Mammary epithelial cell (primary cell): ENCODE measurements at regions of chr15 and their contacts with region 1.

Region 1: DNA sequence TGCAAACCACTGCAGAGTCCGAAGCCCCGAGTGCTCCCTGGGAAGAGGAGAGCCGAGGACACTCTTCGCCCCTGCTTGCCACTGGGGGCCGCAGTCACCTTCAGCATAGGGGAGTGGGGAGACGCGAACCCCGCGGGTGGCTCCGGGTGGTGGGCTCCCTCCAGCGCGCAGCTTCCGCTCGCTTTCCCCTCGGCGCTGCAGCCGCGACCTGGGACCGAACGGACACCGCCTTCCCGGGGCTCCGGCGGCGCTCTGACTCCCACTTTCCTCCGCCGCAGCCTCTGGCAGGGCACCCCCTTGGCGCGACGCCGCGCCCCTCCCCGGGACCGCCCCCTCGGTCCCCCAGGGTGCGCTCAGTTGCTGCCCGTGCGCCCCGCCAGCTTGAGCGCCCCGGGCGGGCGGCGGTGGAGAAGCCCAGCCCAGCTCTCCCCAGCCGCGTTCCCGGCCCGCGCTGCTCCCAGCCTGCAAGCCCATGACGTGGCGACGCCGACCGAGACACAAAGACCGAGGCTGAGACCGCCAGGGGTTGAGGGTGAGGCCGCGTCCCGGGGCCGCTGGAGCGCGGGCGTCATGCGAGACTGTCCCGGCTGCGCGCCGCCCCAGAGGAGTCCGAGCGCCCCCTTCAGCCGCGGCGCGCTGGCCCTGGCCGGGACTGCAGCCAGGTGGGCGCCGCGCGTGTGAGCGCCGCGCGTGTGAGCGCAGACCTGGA is at the start of gene MINAR1:
- DNase-seq: peak; percentile 43
- H3K4me3 ChIP-seq: peak within 1 kb of the TSS; percentile 12 to 44 (median 30)
- H3K27ac ChIP-seq: no peak within 1 kb of the TSS
- H3K4me1 ChIP-seq: peaks cover 12% of the 10 kb centered on the region
- H3K27me3 ChIP-seq: peaks cover 37% of the 10 kb centered on the region
- CTCF ChIP-seq: no peak
- total RNA-seq, gene MINAR1: 0.12 to 0.50 TPM

Region 2: DNA sequence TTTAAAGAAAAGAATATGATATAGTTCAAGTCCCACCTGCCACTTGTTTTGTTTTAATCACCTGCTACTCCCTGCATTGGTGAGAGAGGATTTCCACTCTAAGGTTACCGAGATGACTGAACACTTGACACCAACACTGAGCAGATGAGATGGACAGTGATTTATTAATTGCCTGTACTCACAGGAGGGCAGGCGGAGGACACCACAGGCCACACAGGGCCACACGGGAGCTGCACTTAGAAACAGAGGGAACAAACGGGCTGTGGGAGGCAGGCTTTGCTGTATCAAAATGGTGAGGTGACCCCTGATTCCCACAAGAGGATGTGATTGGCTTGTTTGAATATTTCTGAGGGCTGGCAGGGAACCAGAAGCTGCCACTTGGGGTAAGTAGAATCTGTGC is 11.1 kb after region 1 on chr15:
- CTCF ChIA-PET with region 1: no interaction called
- dilution Hi-C with region 1: no loop called
- in situ Hi-C with region 1: no loop called
- intact Hi-C with region 1: loop called (anchors 1 kb)
- DNase-seq: no peak
- H3K4me3 ChIP-seq: no peak overlapping the region
- H3K27ac ChIP-seq: no peak overlapping the region
- H3K4me1 ChIP-seq: no peaks in the 10 kb centered on the region
- H3K27me3 ChIP-seq: no peaks in the 10 kb centered on the region
- CTCF ChIP-seq: no peak

Region 3: GRCh38 chr15:80228959-80229610 is 797.3 kb after region 1 on chr15:
- CTCF ChIA-PET with region 1: interaction called, 35 read pairs
- dilution Hi-C with region 1: no loop called
- in situ Hi-C with region 1: no loop called
- intact Hi-C with region 1: no loop called
- DNase-seq: peak; percentile 10
- H3K4me3 ChIP-seq: no peak overlapping the region
- H3K27ac ChIP-seq: no peak overlapping the region
- H3K4me1 ChIP-seq: no peaks in the 10 kb centered on the region
- H3K27me3 ChIP-seq: peaks cover 2% of the 10 kb centered on the region
- CTCF ChIP-seq: no peak